ENCODE measurements at regions of chr2 and their contacts with region 1.

Region 1: DNA sequence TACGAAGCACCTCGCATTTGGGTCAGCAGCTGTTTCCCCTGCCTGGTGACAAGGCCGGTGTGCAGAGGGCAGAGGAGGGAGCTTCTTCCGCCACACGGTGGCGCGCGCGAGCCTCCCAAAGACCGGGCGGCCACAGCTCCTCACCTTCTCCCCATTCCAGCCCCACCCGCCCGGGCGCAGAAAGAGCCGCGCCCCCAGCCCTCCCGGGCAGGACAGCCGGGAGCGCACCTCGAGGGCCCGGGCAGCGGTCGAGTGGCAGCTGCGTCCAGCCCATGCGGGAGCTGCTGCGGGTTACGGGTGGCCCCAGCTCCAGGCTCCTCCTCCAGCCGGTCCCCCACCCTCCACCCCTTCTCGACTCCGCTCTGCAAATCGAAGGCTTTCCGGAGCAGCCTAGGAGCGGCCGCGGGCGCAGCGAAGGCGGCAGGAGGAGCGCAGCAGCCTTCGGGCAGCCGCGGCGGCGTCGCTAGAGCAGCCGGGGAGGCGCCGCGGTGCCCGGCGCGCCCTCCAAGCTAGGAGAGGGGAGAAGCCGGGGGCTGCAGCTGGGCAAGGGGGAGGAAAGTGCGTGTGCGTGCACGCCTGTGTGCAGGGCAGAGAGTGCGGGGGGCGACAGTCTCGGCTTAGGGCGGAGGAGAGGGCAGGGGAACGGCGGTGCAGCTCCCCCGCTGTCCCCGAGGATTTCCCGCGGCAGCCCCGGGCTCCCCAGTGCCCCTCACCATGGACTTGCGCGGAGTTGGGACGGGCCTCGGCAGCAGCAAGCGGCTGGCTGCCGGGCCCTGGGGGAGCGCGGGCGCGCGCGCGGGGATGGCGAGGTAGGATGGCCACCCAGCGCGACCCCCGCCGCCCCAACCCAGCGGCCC is at the start of gene CCDC85A:
- DNase-seq: peak; percentile 73
- H3K4me3 ChIP-seq: peak within 1 kb of the TSS; percentile 42 to 59 (median 56)
- H3K27ac ChIP-seq: no peak within 1 kb of the TSS
- H3K4me1 ChIP-seq: peaks cover 15% of the 10 kb centered on the region
- H3K27me3 ChIP-seq: no peaks in the 10 kb centered on the region
- CTCF ChIP-seq: peak; percentile 65 to 87
- total RNA-seq, gene CCDC85A: 0.17 TPM in 1 of 2 donors, not detected in the other

Region 2: DNA sequence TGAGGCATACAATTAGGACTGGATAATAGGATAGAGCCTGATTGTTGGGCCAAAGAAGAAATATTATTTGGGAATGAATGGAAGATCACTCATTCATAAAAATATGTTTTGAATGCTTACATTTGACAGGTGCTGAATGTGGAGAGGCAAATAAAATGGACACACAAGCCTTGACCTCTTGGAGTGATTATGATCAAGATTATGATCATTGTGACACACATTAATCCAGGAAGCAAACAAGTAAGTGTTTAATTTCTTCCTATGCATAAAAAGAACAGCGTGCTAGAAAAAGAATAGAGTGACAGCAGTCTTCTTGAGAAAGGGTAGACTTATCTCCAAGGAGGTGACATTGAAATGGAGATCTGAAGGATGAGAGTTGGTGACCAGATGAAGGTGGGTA is 36.4 kb before region 1 on chr2:
- CTCF ChIA-PET with region 1: no interaction called
- dilution Hi-C with region 1: no loop called
- in situ Hi-C with region 1: no loop called
- intact Hi-C with region 1: no loop called
- DNase-seq: no peak
- H3K4me3 ChIP-seq: no peak overlapping the region
- H3K27ac ChIP-seq: no peak overlapping the region
- H3K4me1 ChIP-seq: no peaks in the 10 kb centered on the region
- H3K27me3 ChIP-seq: no peaks in the 10 kb centered on the region
- CTCF ChIP-seq: no peak

Region 3: DNA sequence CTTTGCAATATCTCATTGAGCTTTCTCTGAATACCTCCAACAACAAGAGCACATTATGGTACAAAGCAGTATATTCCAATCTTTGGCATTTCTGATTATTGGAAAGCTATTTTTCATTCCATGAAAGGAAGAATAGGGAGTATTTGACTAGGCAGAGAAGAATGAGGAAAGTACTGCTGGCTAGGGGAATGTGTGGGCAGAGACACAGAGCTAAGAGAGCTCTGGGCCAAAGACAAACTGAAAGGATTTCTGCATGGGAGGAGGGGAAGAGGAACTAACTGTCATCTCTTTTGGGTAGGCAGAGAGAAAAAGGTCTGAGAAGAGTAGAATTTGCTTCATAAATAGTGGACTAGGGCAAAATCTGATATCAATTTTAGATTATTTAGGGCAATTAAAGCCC is 150.8 kb after region 1 on chr2:
- CTCF ChIA-PET with region 1: no interaction called
- dilution Hi-C with region 1: no loop called
- in situ Hi-C with region 1: no loop called
- intact Hi-C with region 1: no loop called
- DNase-seq: no peak
- H3K4me3 ChIP-seq: no peak overlapping the region
- H3K27ac ChIP-seq: no peak overlapping the region
- H3K4me1 ChIP-seq: no peaks in the 10 kb centered on the region
- H3K27me3 ChIP-seq: peaks cover 4% of the 10 kb centered on the region
- CTCF ChIP-seq: no peak

Region 4: GRCh38 chr2:56522605-56523089 is 338.8 kb after region 1 on chr2:
- CTCF ChIA-PET with region 1: no interaction called
- dilution Hi-C with region 1: no loop called
- in situ Hi-C with region 1: no loop called
- intact Hi-C with region 1: loop called (anchors 10 kb)
- DNase-seq: no peak
- H3K4me3 ChIP-seq: no peak overlapping the region
- H3K27ac ChIP-seq: no peak overlapping the region
- H3K4me1 ChIP-seq: no peaks in the 10 kb centered on the region
- H3K27me3 ChIP-seq: no peaks in the 10 kb centered on the region
- CTCF ChIP-seq: no peak

Region 5: GRCh38 chr2:56671973-56672571 is 488.2 kb after region 1 on chr2:
- CTCF ChIA-PET with region 1: no interaction called
- dilution Hi-C with region 1: no loop called
- in situ Hi-C with region 1: no loop called
- intact Hi-C with region 1: loop called (anchors 10 kb)
- DNase-seq: peak; percentile 4
- H3K4me3 ChIP-seq: no peak overlapping the region
- H3K27ac ChIP-seq: no peak overlapping the region
- H3K4me1 ChIP-seq: no peaks in the 10 kb centered on the region
- H3K27me3 ChIP-seq: no peaks in the 10 kb centered on the region
- CTCF ChIP-seq: peak in 1 of 2 donors; percentile 31

Region 6: DNA sequence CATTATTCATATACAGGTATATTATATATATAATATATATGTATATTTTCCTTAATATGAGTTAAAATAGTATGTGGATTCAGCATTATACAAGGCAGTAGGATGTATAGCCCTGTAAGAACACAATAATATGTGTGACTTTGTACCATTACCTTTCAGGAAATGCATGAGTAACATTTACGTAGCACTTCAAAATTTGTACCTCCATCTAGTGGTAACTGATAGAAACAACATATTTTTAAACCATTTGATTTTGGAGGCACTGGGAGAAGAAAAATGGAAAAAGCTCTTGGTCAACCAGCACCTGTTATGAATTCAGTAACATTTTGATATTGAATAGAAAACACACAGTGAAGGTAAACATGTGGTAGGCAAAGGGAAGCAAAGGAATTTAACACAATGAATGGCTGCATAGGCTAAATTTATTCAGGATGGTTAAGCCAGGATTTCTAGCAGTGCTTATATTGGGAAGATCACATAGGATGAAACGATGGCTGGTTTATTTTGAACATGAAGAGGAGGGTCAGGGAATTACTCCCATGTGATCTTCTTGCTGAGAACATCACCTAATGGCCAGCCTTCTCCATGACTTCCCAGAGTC is 565.4 kb after region 1 on chr2:
- CTCF ChIA-PET with region 1: interaction called, 4 read pairs
- dilution Hi-C with region 1: no loop called
- in situ Hi-C with region 1: loop called (anchors 10 to 25 kb)
- intact Hi-C with region 1: loop called (anchors 2 kb)
- DNase-seq: peak; percentile 28
- H3K4me3 ChIP-seq: no peak overlapping the region
- H3K27ac ChIP-seq: no peak overlapping the region
- H3K4me1 ChIP-seq: no peaks in the 10 kb centered on the region
- H3K27me3 ChIP-seq: no peaks in the 10 kb centered on the region
- CTCF ChIP-seq: peak; percentile 56 to 60

Region 7: GRCh38 chr2:56871644-56872043 is 687.8 kb after region 1 on chr2:
- CTCF ChIA-PET with region 1: interaction called, 3 read pairs
- dilution Hi-C with region 1: no loop called
- in situ Hi-C with region 1: no loop called
- intact Hi-C with region 1: loop called (anchors 10 kb)
- DNase-seq: no peak
- H3K4me3 ChIP-seq: no peak overlapping the region
- H3K27ac ChIP-seq: no peak overlapping the region
- H3K4me1 ChIP-seq: no peaks in the 10 kb centered on the region
- H3K27me3 ChIP-seq: no peaks in the 10 kb centered on the region
- CTCF ChIP-seq: no peak

Region 8: GRCh38 chr2:57497489-57498096 is 1313.7 kb after region 1 on chr2:
- CTCF ChIA-PET with region 1: no interaction called
- dilution Hi-C with region 1: no loop called
- in situ Hi-C with region 1: loop called (anchors 25 kb)
- intact Hi-C with region 1: loop called (anchors 1 kb)
- DNase-seq: peak; percentile 24
- H3K4me3 ChIP-seq: no peak overlapping the region
- H3K27ac ChIP-seq: no peak overlapping the region
- H3K4me1 ChIP-seq: no peaks in the 10 kb centered on the region
- H3K27me3 ChIP-seq: no peaks in the 10 kb centered on the region
- CTCF ChIP-seq: peak; percentile 80 to 91